PC-9 (cell line): ENCODE measurements at regions of chr20 and their contacts with region 1.

Region 1: DNA sequence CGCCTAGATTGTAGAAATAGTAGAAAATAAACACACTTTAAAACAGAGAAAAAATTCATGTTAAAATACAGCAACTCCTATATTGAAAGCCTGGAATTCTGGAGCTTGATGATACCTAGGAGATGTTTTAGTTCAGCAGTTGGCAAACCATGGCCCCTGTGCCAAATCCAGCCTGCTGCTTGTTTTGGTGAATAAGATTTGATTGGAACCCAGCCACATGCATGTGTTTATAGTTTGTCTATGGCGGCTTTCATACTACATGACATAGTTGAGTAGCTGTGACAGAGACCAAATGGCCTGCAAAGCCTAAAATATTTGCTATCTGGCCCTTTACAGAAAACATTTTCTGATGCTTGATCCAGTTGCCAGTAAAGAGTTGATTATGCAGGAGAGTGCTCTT is 57.2 kb downstream of the PAX1 start:
- DNase-seq: no peak
- H3K4me3 ChIP-seq: no peak overlapping the region
- H3K27ac ChIP-seq: no peak overlapping the region
- H3K4me1 ChIP-seq: no peaks in the 10 kb centered on the region
- H3K27me3 ChIP-seq: no peaks in the 10 kb centered on the region
- CTCF ChIP-seq: no peak

Region 2: GRCh38 chr20:21795955-21796458 is 33.4 kb after region 1 on chr20:
- CTCF ChIA-PET with region 1: no interaction called
- POLR2A ChIA-PET with region 1: no interaction called
- intact Hi-C with region 1: no loop called
- DNase-seq: no peak
- H3K4me3 ChIP-seq: no peak overlapping the region
- H3K27ac ChIP-seq: no peak overlapping the region
- H3K4me1 ChIP-seq: no peaks in the 10 kb centered on the region
- H3K27me3 ChIP-seq: peaks cover 11% of the 10 kb centered on the region
- CTCF ChIP-seq: no peak

Region 3: DNA sequence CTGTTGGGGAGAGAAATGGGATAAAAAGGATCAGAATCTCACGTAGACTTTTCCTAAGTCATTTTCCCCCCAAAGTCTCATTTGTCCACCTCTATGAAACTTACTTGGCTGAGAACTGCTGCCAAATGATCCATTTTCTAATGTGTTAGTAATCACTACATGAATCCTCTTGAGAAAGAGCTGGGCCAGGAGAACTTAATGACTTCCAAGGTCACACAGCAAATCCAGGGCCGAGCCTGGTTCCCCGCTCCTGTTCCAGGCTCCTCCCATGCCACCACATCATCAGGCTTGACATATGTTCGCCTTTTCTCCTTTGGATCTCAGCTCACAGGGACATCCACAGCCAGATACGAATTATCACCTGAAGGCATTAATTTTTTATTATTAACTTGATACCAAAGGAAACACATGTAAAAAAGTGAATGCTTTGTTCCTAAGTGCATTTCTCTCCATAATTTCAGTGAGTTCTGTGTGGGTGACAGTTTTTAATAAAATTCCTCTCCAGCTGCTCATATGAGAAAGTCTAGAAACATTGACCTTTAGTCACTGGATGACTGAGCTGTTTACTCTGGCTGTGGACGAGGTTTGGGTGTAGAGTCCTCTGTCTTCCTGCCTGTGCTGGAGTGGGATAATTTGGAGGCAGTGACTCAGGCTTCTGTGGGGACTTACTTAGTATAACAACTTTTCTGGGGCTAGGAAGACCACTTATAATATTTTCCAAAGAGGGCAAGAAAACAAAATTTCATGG is 219.1 kb after region 1 on chr20:
- CTCF ChIA-PET with region 1: no interaction called
- POLR2A ChIA-PET with region 1: interaction called, 12 read pairs
- intact Hi-C with region 1: no loop called
- DNase-seq: no peak
- H3K4me3 ChIP-seq: no peak overlapping the region
- H3K27ac ChIP-seq: no peak overlapping the region
- H3K4me1 ChIP-seq: no peaks in the 10 kb centered on the region
- H3K27me3 ChIP-seq: no peaks in the 10 kb centered on the region
- CTCF ChIP-seq: no peak